ENCODE measurements at regions of chr19 and their contacts with region 1.

Region 1: DNA sequence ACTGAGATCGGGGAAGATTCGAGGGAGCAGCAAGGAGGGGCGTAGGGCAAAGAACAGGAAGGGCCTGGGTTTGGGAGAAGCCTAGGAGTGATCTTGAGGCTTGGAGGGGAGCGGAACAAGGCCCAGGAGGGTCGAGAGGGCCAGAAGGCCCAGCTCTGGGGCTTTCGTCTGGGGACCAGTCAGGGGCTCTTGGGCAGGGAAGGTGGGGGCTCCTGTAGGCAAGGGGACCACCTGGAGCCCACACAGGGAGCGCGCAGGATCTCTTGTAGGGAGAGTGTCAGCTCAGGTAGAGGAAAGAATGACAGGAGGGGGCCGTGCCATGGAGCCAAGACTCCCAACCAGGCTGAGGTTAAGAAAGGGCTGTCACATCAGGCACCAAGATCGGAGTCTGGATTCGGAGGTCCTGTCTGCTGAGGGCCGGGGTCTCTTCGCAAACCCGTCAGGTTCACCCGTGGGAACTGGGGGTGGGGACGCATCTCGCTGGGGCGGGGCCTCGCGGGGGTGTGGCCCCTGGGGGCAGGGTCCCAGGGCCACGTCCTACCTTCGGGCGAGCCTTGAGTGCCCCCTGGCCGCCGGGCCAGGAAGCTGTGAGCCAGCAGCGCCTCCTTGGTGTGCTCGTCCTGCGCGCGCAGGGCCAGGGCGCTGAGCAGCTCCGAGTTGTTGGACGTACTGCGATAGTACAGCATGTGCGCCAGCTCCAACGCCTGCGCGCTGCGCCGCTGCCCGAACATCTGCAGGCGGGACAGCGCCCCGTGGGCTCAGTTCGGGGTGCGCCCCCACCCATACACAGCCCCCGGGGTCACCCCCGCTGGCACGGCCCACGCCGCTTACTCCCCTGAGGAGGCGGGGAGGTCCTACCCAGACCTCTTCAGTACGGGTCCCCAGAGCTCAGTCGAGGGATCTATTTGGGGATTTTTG is 8.4 kb downstream of the EMP3 start:
- DNase-seq: peak in 1 of 2 experiments; percentile 90
- H3K4me3 ChIP-seq: peak overlapping the region; percentile 33 to 57 (median 46)
- H3K27ac ChIP-seq: no peak overlapping the region
- H3K4me1 ChIP-seq: peaks cover 4 to 23% (median 10%) of the 10 kb centered on the region in 4 experiments
- H3K27me3 ChIP-seq: no peaks in the 10 kb centered on the region
- CTCF ChIP-seq: peak; percentile 91 to 98 (median 93)
- EP300 ChIP-seq: no peak
- POLR2A ChIP-seq: peak in 1 of 2 experiments; percentile 61; a peak in 2 of 3 replicates
- RAD21 ChIP-seq: peak; percentile 83 to 89

Region 2: GRCh38 chr19:48210005-48210404 is 123.7 kb before region 1 on chr19:
- CTCF ChIA-PET with region 1: no interaction called
- POLR2A ChIA-PET with region 1: no interaction called
- DNase-seq: no peak
- H3K4me3 ChIP-seq: no peak overlapping the region
- H3K27ac ChIP-seq: no peak overlapping the region
- H3K4me1 ChIP-seq: no peaks in the 10 kb centered on the region
- H3K27me3 ChIP-seq: no peaks in the 10 kb centered on the region; a peak in 1 of 7 replicates
- CTCF ChIP-seq: no peak
- EP300 ChIP-seq: no peak
- POLR2A ChIP-seq: no peak
- RAD21 ChIP-seq: no peak

Region 3: GRCh38 chr19:48321622-48322591 is 11.8 kb before region 1 on chr19:
- CTCF ChIA-PET with region 1: interaction called, 60 read pairs
- POLR2A ChIA-PET with region 1: interaction called, 35 read pairs
- DNase-seq: peak; percentile 86 to 98
- H3K4me3 ChIP-seq: peak overlapping the region; percentile 49 to 81 (median 64)
- H3K27ac ChIP-seq: peak overlapping the region; percentile 92
- H3K4me1 ChIP-seq: peaks cover 0 to 20% (median 10%) of the 10 kb centered on the region in 4 experiments; a peak in 6 of 7 replicates
- H3K27me3 ChIP-seq: peaks cover 0 to 5% (median 2%) of the 10 kb centered on the region in 4 experiments; a peak in 1 of 7 replicates
- CTCF ChIP-seq: peak in 2 of 3 experiments; percentile 4 to 16; a peak in 1 of 4 replicates
- EP300 ChIP-seq: no peak
- POLR2A ChIP-seq: peak; percentile 66 to 92
- RAD21 ChIP-seq: no peak